Endothelial cell of umbilical vein (primary cell): ENCODE measurements at regions of chr12 and their contacts with region 1.

Region 1: DNA sequence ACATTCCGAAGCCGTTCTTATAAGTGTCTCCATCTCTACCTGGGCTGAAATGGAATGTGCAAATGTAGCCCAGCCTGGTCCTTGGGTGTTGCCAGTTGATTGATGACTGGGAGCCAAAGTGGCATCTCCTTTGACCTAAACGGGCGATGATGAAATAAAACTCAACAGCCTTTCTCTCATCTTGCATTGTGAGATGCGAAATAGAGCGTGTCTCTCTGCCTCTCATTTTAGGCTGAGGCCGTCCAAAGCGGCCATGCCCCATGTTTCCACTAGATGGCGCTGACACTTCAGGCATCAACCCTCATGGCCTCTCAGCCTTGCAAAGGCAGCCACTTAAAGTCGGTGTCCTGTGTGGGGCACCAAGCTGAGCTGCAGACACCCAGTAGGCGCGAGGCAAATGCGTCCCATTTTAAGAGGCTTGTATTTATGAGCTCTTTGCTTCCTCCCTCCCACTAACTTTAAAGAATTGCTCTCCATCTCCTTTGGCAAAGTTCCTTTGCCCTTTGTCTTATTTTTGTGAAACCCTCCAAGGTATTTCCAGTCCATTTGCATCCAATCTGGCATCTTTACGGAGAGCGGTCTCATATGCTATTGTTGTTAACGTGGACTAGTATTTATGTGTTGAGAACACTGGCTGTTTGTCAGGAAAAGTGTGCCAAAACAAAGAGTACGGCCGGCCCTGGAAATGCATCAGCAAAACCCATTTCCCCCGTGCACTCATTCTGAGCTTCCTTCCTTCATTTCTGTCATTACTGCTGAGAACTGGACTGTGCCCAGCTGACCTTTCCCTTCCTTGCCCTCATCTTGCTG is 25.0 kb downstream of the GPRC5A start:
- DNase-seq: peak; percentile 97
- H3K4me3 ChIP-seq: peak overlapping the region in 1 of 3 experiments; percentile 15
- H3K27ac ChIP-seq: peak overlapping the region; percentile 88
- H3K4me1 ChIP-seq: peaks cover 36% of the 10 kb centered on the region
- H3K27me3 ChIP-seq: no peaks in the 10 kb centered on the region
- CTCF ChIP-seq: peak; percentile 96 to 97
- POLR2A ChIP-seq: peak; percentile 21

Region 2: GRCh38 chr12:12786716-12787601 is 129.4 kb before region 1 on chr12:
- CTCF ChIA-PET with region 1: interaction called, 14 read pairs
- POLR2A ChIA-PET with region 1: no interaction called
- dilution Hi-C with region 1: no loop called
- intact Hi-C with region 1: loop called (anchors 1 kb)
- DNase-seq: peak; percentile 88
- H3K4me3 ChIP-seq: peak overlapping the region; percentile 6 to 44 (median 39)
- H3K27ac ChIP-seq: peak overlapping the region; percentile 78
- H3K4me1 ChIP-seq: peaks cover 43% of the 10 kb centered on the region
- H3K27me3 ChIP-seq: no peaks in the 10 kb centered on the region
- CTCF ChIP-seq: peak in 1 of 2 donors; percentile 8
- POLR2A ChIP-seq: peak; percentile 91

Region 3: DNA sequence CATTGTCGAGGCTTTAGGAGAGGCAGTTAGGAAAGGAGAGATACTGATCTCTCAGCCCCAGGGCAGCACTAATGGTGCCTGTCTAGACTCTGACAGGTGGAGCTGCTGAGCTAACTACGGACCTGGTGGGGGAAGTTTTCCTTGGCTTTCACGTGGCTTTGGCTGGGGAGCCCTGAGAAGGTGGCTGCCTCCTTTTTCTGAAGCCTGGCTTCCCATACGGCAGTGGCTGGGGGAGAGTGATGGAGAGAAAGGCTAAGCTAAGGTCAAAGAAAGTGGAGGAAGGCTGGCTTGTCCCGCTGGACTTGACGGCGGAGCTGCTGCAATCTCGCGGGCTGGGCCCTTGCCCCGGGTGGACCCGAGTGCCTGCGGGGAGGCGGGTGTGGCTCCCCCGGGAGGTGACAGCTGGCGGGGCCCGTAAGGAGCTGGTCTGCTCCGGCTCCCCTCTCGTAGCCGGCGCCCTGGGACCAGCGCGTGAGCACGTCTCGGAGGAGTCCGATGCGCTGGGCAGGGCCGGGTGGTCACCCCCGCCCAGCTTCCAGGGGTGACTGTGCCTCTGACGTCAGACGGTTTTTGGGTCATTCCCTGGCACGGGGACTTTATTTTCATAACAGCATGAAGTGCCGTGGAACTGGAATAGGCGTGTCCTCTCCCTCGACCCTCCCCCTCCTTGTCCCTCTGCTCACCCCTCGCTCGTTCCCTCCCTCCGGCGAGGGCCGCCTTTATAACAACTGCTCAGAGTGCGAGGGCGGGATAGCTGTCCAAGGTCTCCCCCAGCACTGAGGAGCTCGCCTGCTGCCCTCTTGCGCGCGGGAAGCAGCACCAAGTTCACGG is 25.3 kb before region 1 on chr12 and contains the start of gene GPRC5A:
- CTCF ChIA-PET with region 1: interaction called, 29 read pairs
- POLR2A ChIA-PET with region 1: interaction called, 4 read pairs
- dilution Hi-C with region 1: no loop called
- intact Hi-C with region 1: loop called (anchors 1 kb)
- DNase-seq: peak; percentile 96
- H3K4me3 ChIP-seq: peak within 1 kb of the TSS; percentile 42 to 55 (median 50)
- H3K27ac ChIP-seq: peak within 1 kb of the TSS; percentile 93
- H3K4me1 ChIP-seq: peaks cover 22% of the 10 kb centered on the region
- H3K27me3 ChIP-seq: no peaks in the 10 kb centered on the region
- CTCF ChIP-seq: peak in 1 of 2 donors; percentile 33
- POLR2A ChIP-seq: peak; percentile 86
- total RNA-seq, gene GPRC5A: 17.6 and 22.7 TPM in 2 replicates

Region 4: GRCh38 chr12:12983420-12984035 is 67.2 kb after region 1 on chr12:
- CTCF ChIA-PET with region 1: interaction called, 116 read pairs
- POLR2A ChIA-PET with region 1: interaction called, 3 read pairs
- dilution Hi-C with region 1: no loop called
- intact Hi-C with region 1: loop called (anchors 1 kb)
- DNase-seq: peak; percentile 78
- H3K4me3 ChIP-seq: no peak overlapping the region
- H3K27ac ChIP-seq: peak overlapping the region; percentile 25
- H3K4me1 ChIP-seq: peaks cover 20% of the 10 kb centered on the region
- H3K27me3 ChIP-seq: no peaks in the 10 kb centered on the region
- CTCF ChIP-seq: peak; percentile 56 to 60
- POLR2A ChIP-seq: no peak

Region 5: GRCh38 chr12:13094347-13094746 is 178.0 kb after region 1 on chr12:
- CTCF ChIA-PET with region 1: no interaction called
- POLR2A ChIA-PET with region 1: no interaction called
- dilution Hi-C with region 1: no loop called
- intact Hi-C with region 1: loop called (anchors 1 kb)
- DNase-seq: peak; percentile 30
- H3K4me3 ChIP-seq: no peak overlapping the region
- H3K27ac ChIP-seq: peak overlapping the region; percentile 59
- H3K4me1 ChIP-seq: peaks cover 42% of the 10 kb centered on the region
- H3K27me3 ChIP-seq: no peaks in the 10 kb centered on the region
- CTCF ChIP-seq: no peak
- POLR2A ChIP-seq: no peak

Region 6: GRCh38 chr12:13211859-13212664 is 295.7 kb after region 1 on chr12:
- CTCF ChIA-PET with region 1: interaction called, 60 read pairs
- POLR2A ChIA-PET with region 1: no interaction called
- dilution Hi-C with region 1: no loop called
- intact Hi-C with region 1: loop called (anchors 1 kb)
- DNase-seq: peak; percentile 70
- H3K4me3 ChIP-seq: no peak overlapping the region
- H3K27ac ChIP-seq: peak overlapping the region; percentile 54
- H3K4me1 ChIP-seq: peaks cover 49% of the 10 kb centered on the region
- H3K27me3 ChIP-seq: no peaks in the 10 kb centered on the region
- CTCF ChIP-seq: peak; percentile 72 to 76
- POLR2A ChIP-seq: no peak

Region 7: GRCh38 chr12:13661005-13661887 is 744.9 kb after region 1 on chr12:
- CTCF ChIA-PET with region 1: no interaction called
- POLR2A ChIA-PET with region 1: no interaction called
- dilution Hi-C with region 1: no loop called
- intact Hi-C with region 1: loop called (anchors 2 kb)
- DNase-seq: peak; percentile 44
- H3K4me3 ChIP-seq: no peak overlapping the region
- H3K27ac ChIP-seq: no peak overlapping the region
- H3K4me1 ChIP-seq: no peaks in the 10 kb centered on the region
- H3K27me3 ChIP-seq: peaks cover 0 to 4% of the 10 kb centered on the region in 2 experiments
- CTCF ChIP-seq: peak; percentile 63 to 80
- POLR2A ChIP-seq: no peak